Adrenal gland (tissue), 19 donors: ENCODE measurements at regions of chr18 and their contacts with region 1.

Region 1: DNA sequence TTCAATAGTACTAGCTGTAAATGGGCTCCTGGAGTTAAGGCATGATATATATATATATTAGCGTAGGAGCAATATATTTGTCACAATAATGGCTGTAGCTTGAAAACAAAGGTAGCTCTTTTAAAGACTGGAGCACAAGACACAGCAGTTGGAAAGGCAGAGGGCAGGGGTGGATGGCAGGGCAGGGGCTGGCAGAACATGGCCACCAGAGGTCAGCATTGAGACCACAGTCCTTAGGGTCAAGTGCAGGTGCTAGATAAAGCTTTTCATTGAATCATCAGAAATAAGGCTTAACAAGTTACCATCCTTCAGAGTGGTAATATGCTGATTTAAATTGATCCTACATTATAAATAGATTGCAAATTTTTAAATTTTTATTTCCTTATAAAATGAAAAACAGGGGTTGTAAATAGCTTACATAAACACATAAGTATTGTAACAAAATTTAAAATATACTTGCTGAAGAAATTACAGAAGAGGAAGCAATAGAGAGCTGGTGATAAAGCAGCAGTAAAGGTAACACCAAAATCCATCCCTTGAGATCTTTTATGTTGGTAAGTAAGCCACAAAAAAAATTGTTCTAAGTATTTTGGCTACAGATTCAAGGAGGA is 161.2 kb upstream of the PIEZO2 start:
- DNase-seq: peak; percentile 57 to 76 (median 64)
- H3K4me3 ChIP-seq: no peak overlapping the region
- H3K27ac ChIP-seq: no peak overlapping the region
- H3K4me1 ChIP-seq: peaks cover 0 to 14% of the 10 kb centered on the region in 2 donors
- H3K27me3 ChIP-seq: no peaks in the 10 kb centered on the region
- CTCF ChIP-seq: peak; percentile 52 to 66 (median 62)
- POLR2A ChIP-seq: no peak

Region 2: DNA sequence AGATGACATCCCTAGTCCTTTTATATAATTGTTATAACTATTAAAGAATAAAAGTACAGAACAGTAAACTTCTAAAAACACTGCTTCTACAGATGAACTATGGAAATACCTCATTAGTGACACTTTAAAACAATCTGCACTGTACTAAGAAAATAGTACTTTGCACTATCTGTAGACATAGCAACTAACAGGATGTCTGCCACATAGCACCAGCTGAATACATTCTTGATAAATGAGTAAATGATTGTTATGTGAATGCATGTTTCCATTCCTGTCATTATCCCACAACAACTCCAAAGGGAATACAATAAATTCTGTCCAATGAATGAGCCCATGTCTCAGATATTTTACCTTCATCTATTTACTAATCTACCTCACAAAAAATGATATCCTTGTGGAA is 183.5 kb after region 1 on chr18:
- intact Hi-C with region 1: no loop called
- DNase-seq: no peak
- H3K4me3 ChIP-seq: no peak overlapping the region
- H3K27ac ChIP-seq: no peak overlapping the region
- H3K4me1 ChIP-seq: peaks cover 0 to 2% of the 10 kb centered on the region in 2 donors
- H3K27me3 ChIP-seq: no peaks in the 10 kb centered on the region
- CTCF ChIP-seq: no peak
- POLR2A ChIP-seq: no peak

Region 3: GRCh38 chr18:11518788-11519685 is 208.5 kb after region 1 on chr18:
- intact Hi-C with region 1: loop called in 1 of 2 experiments (anchors 5 kb)
- DNase-seq: peak; percentile 34 to 73 (median 67)
- H3K4me3 ChIP-seq: no peak overlapping the region
- H3K27ac ChIP-seq: no peak overlapping the region
- H3K4me1 ChIP-seq: no peaks in the 10 kb centered on the region
- H3K27me3 ChIP-seq: no peaks in the 10 kb centered on the region
- CTCF ChIP-seq: peak; percentile 51 to 65 (median 64)
- POLR2A ChIP-seq: no peak

Region 4: DNA sequence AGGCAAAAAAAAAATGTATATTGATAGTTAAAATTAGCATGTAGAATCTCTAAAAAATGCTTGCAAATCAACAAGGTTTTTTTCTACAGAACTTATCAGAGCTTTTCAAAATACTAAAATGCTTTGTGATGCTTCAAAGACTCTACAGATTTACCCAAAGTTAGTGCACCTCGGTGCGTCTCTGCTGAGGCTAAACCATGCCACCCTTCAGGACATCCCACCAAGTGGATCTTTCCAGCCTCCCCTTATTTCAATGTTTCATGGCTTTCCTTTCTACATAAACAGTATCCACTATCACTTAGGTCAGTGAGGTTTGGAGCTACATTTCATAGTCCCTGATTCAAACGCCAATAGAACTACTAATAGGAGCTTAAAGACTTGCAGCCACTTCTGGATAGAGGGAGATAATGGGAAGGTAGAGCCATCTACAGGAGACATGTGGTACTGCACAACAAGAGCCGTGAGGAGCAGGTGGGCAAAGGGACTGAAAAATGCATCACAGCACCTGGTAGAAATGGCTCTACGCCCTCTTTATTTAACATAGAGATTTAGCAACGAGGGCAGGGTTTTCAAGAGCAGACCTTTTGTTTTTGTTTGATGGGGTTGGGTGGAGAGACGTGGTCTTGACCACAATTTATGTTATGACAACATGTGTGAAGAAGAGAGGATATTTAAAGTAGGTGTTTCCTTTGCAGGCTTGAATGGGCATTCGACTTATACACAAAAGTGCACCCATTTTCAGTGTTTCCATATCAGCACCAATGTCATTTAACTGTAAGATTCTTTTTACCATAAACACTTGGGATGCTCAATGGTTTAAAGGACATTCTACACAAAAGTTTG is 242.7 kb after region 1 on chr18:
- intact Hi-C with region 1: loop called in 1 of 2 experiments (anchors 10 kb)
- DNase-seq: peak in 5 of 7 donors; percentile 17 to 55 (median 29)
- H3K4me3 ChIP-seq: no peak overlapping the region
- H3K27ac ChIP-seq: no peak overlapping the region
- H3K4me1 ChIP-seq: no peaks in the 10 kb centered on the region
- H3K27me3 ChIP-seq: peaks cover 12% of the 10 kb centered on the region
- CTCF ChIP-seq: peak; percentile 67 to 87 (median 78)
- POLR2A ChIP-seq: no peak